IMR-90 (cell line): ENCODE measurements at regions of chr19 and their contacts with region 1.

Region 1: GRCh38 chr19:47243776-47244547 is 12.4 kb upstream of the CCDC9 start:
- DNase-seq: peak; percentile 97
- ATAC-seq: peak; percentile 68
- H3K4me3 ChIP-seq: peak overlapping the region; percentile 37
- H3K27ac ChIP-seq: peak overlapping the region; percentile 82
- H3K4me1 ChIP-seq: peaks cover 27% of the 10 kb centered on the region
- H3K27me3 ChIP-seq: no peaks in the 10 kb centered on the region
- CTCF ChIP-seq: peak; percentile 99
- POLR2A ChIP-seq: peak; percentile 69
- RAD21 ChIP-seq: peak; percentile 96

Region 2: DNA sequence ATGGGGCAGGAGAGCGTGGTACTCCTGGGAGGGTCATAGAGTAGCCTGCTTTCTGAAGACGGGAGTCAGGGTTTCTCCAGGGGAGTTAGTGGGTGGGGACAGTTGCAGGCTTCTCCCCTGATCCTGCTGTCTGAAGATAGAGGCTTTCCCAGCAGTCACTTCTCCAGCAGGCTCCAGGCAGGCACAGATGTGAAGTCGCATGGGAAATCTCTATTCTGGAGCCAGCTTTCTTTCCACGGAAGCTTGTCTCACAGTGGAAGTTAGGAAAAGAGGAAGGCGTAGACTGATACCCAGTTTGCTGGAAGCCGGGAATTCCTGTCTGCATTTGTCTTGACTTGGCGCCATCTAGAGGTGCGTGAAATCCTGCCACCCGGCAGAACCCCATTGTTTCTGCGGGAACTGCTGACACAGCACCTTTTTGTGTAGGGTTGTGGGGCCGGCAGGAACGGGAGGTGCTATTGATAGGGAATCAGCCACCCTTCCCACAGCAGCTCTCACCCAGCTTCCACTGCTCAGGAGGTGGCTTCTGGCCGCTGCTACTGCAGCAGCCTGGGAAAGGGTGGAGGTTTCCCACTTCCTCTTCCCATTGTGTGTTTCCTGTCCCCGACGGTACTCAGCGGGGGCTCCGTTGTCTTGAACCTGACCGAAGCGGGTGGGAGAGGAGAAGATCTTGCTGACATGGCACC is 252.8 kb before region 1 on chr19:
- CTCF ChIA-PET with region 1: no interaction called
- POLR2A ChIA-PET with region 1: no interaction called
- dilution Hi-C with region 1: no loop called
- in situ Hi-C with region 1: no loop called
- intact Hi-C with region 1: no loop called
- DNase-seq: peak; percentile 81
- ATAC-seq: peak; percentile 95
- H3K4me3 ChIP-seq: no peak overlapping the region
- H3K27ac ChIP-seq: no peak overlapping the region
- H3K4me1 ChIP-seq: no peaks in the 10 kb centered on the region
- H3K27me3 ChIP-seq: no peaks in the 10 kb centered on the region
- CTCF ChIP-seq: peak; percentile 95
- POLR2A ChIP-seq: no peak
- RAD21 ChIP-seq: peak; percentile 98

Region 3: GRCh38 chr19:47130591-47131227 is 113.3 kb before region 1 on chr19 and contains the start of gene SAE1:
- CTCF ChIA-PET with region 1: interaction called, 14 read pairs
- POLR2A ChIA-PET with region 1: interaction called, 5 read pairs
- dilution Hi-C with region 1: no loop called
- in situ Hi-C with region 1: no loop called
- intact Hi-C with region 1: loop called (anchors 5 kb)
- DNase-seq: peak; percentile 99
- ATAC-seq: peak; percentile 88
- H3K4me3 ChIP-seq: peak within 1 kb of the TSS; percentile 79
- H3K27ac ChIP-seq: peak within 1 kb of the TSS; percentile 88
- H3K4me1 ChIP-seq: peaks cover 14% of the 10 kb centered on the region
- H3K27me3 ChIP-seq: no peaks in the 10 kb centered on the region
- CTCF ChIP-seq: peak; percentile 65
- POLR2A ChIP-seq: peak; percentile 84
- RAD21 ChIP-seq: peak; percentile 38; the same call in 1 of the 2 replicates
- total RNA-seq, gene SAE1: 184 and 192 TPM in 2 replicates

Region 4: GRCh38 chr19:47152224-47153017 is 91.5 kb before region 1 on chr19:
- CTCF ChIA-PET with region 1: interaction called, 16 read pairs
- POLR2A ChIA-PET with region 1: interaction called, 8 read pairs
- dilution Hi-C with region 1: no loop called
- in situ Hi-C with region 1: loop called (anchors 5 kb)
- intact Hi-C with region 1: loop called (anchors 1 kb)
- DNase-seq: peak; percentile 47
- ATAC-seq: no peak
- H3K4me3 ChIP-seq: no peak overlapping the region
- H3K27ac ChIP-seq: no peak overlapping the region
- H3K4me1 ChIP-seq: peaks cover 10% of the 10 kb centered on the region
- H3K27me3 ChIP-seq: no peaks in the 10 kb centered on the region
- CTCF ChIP-seq: no peak
- POLR2A ChIP-seq: no peak
- RAD21 ChIP-seq: no peak

Region 5: GRCh38 chr19:47210689-47211316 is 33.2 kb before region 1 on chr19:
- CTCF ChIA-PET with region 1: interaction called, 67 read pairs
- POLR2A ChIA-PET with region 1: interaction called, 6 read pairs
- dilution Hi-C with region 1: no loop called
- in situ Hi-C with region 1: no loop called
- intact Hi-C with region 1: loop called (anchors 1 kb)
- DNase-seq: peak; percentile 80
- ATAC-seq: peak; percentile 70
- H3K4me3 ChIP-seq: no peak overlapping the region
- H3K27ac ChIP-seq: peak overlapping the region; percentile 90
- H3K4me1 ChIP-seq: peaks cover 21% of the 10 kb centered on the region
- H3K27me3 ChIP-seq: no peaks in the 10 kb centered on the region
- CTCF ChIP-seq: peak; percentile 81
- POLR2A ChIP-seq: no peak
- RAD21 ChIP-seq: peak; percentile 75

Region 6: GRCh38 chr19:47256688-47257443 is 12.9 kb after region 1 on chr19:
- CTCF ChIA-PET with region 1: interaction called, 11 read pairs
- POLR2A ChIA-PET with region 1: interaction called, 10 read pairs
- dilution Hi-C with region 1: no loop called
- in situ Hi-C with region 1: no loop called
- intact Hi-C with region 1: no loop called
- DNase-seq: peak; percentile 98
- ATAC-seq: peak; percentile 84
- H3K4me3 ChIP-seq: peak overlapping the region; percentile 59
- H3K27ac ChIP-seq: peak overlapping the region; percentile 92
- H3K4me1 ChIP-seq: peaks cover 20% of the 10 kb centered on the region
- H3K27me3 ChIP-seq: no peaks in the 10 kb centered on the region
- CTCF ChIP-seq: no peak
- POLR2A ChIP-seq: no peak
- RAD21 ChIP-seq: no peak

Region 7: DNA sequence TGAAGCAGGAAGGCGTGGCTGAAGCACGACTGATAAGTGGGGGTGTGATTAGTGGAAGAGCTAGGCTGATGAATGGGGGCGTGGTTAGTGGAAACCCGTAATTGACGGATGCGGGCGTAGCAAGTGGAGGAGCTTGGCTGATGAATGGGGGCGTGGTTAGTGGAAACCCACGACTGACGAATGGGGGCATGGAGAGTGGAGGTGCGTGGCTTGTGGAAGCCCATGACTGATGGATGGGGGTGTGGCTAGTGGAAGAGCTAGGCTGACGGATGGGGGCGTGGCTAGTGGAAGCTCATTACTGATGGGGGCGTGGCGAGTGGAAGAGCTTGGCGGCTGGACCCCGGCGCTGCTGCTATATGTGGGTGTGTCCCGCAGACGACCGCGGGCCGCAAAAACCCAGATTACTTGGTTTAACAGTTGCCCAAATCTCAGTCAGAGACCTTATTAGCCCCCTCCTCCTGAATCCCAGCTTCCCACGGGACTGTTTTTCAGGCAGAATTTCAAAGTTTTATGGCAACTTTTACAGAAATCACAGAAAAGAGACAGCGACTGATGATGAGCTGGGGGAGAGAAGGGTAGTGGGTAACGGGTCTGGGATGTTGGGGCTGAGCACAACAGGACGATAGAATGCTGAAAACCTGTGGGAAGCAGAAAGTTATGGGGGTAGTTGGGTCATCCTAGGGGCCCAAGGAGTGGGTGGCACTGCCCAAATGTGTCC is 184.4 kb after region 1 on chr19:
- CTCF ChIA-PET with region 1: no interaction called
- POLR2A ChIA-PET with region 1: no interaction called
- dilution Hi-C with region 1: no loop called
- in situ Hi-C with region 1: no loop called
- intact Hi-C with region 1: no loop called
- DNase-seq: peak; percentile 98
- ATAC-seq: peak; percentile 94
- H3K4me3 ChIP-seq: peak overlapping the region; percentile 12; the same call in 1 of the 2 replicates
- H3K27ac ChIP-seq: no peak overlapping the region
- H3K4me1 ChIP-seq: peaks cover 3% of the 10 kb centered on the region; the same call in 1 of the 2 replicates
- H3K27me3 ChIP-seq: peaks cover 10% of the 10 kb centered on the region; the same call in 1 of the 2 replicates
- CTCF ChIP-seq: no peak
- POLR2A ChIP-seq: no peak
- RAD21 ChIP-seq: no peak